ENCODE measurements at regions of chr9 and their contacts with region 1.

Region 1: GRCh38 chr9:25010027-25010662 is 464.4 kb upstream of the IZUMO3 start:
- DNase-seq: no peak
- H3K4me3 ChIP-seq: no peak overlapping the region
- H3K4me3 Mint-ChIP-seq: no peak overlapping the region
- H3K27ac ChIP-seq: no peak overlapping the region
- H3K27ac Mint-ChIP-seq: no peak overlapping the region
- H3K4me1 ChIP-seq: no peaks in the 10 kb centered on the region
- H3K4me1 Mint-ChIP-seq: no peaks in the 10 kb centered on the region
- H3K27me3 ChIP-seq: no peaks in the 10 kb centered on the region
- H3K27me3 Mint-ChIP-seq: no peaks in the 10 kb centered on the region

Region 2: DNA sequence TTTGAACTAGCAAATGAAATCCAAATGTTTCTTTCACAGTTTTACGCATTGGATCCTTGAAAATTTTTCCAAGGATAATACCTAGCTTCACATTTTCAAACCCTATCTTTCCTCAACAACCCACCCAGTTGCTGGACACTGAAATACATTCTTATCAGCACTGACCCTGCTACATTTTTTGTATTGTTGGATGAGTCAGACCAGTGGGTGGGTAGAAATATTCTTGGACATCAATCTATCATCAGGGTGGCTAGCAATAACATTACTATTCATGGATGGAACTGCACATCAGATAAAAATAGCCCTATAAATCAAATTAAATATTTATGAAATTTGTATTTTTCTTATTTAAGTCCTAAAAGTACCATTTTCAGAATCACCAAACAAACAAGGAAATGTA is 57.1 kb before region 1 on chr9:
- CTCF ChIA-PET with region 1: no interaction called
- POLR2A ChIA-PET with region 1: no interaction called
- intact Hi-C with region 1: loop called (anchors 10 kb)
- DNase-seq: no peak
- H3K4me3 ChIP-seq: no peak overlapping the region
- H3K4me3 Mint-ChIP-seq: no peak overlapping the region
- H3K27ac ChIP-seq: no peak overlapping the region
- H3K27ac Mint-ChIP-seq: no peak overlapping the region
- H3K4me1 ChIP-seq: no peaks in the 10 kb centered on the region
- H3K4me1 Mint-ChIP-seq: no peaks in the 10 kb centered on the region
- H3K27me3 ChIP-seq: no peaks in the 10 kb centered on the region
- H3K27me3 Mint-ChIP-seq: no peaks in the 10 kb centered on the region

Region 3: DNA sequence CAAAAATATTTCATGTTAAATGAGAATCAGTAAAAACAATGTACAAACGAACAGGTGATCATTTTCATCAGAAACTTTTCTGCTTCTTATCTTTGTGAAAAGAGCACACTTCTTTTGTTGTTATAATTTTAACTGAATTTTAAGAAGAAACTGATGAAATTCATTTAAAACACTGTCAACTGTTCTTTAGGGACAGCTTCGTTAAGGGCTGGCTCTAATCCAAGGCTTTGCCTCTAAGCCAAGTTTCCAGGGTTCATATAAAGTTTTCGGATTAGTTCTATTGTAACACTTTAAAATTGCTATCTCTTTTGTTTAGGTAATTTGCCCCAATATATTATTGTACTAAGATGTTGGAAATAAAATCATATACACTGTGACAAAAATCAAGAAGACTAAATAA is 108.9 kb after region 1 on chr9:
- CTCF ChIA-PET with region 1: no interaction called
- POLR2A ChIA-PET with region 1: no interaction called
- intact Hi-C with region 1: no loop called
- DNase-seq: no peak
- H3K4me3 ChIP-seq: no peak overlapping the region
- H3K4me3 Mint-ChIP-seq: no peak overlapping the region
- H3K27ac ChIP-seq: no peak overlapping the region
- H3K27ac Mint-ChIP-seq: no peak overlapping the region
- H3K4me1 ChIP-seq: no peaks in the 10 kb centered on the region
- H3K4me1 Mint-ChIP-seq: no peaks in the 10 kb centered on the region
- H3K27me3 ChIP-seq: no peaks in the 10 kb centered on the region
- H3K27me3 Mint-ChIP-seq: no peaks in the 10 kb centered on the region